ENCODE measurements at regions of chr19 and their contacts with region 1.

Region 1: GRCh38 chr19:2648528-2648937 is 54.0 kb downstream of the GNG7 start:
- H3K4me3 Mint-ChIP-seq: no peak overlapping the region
- H3K27ac Mint-ChIP-seq: no peak overlapping the region
- H3K4me1 Mint-ChIP-seq: no peaks in the 10 kb centered on the region
- H3K27me3 Mint-ChIP-seq: no peaks in the 10 kb centered on the region

Region 2: GRCh38 chr19:2691951-2692350 is 43.4 kb after region 1 on chr19:
- intact Hi-C with region 1: loop called (anchors 5 kb)
- H3K4me3 Mint-ChIP-seq: no peak overlapping the region
- H3K27ac Mint-ChIP-seq: no peak overlapping the region
- H3K4me1 Mint-ChIP-seq: peaks cover 15% of the 10 kb centered on the region
- H3K27me3 Mint-ChIP-seq: peaks cover 1% of the 10 kb centered on the region

Region 3: DNA sequence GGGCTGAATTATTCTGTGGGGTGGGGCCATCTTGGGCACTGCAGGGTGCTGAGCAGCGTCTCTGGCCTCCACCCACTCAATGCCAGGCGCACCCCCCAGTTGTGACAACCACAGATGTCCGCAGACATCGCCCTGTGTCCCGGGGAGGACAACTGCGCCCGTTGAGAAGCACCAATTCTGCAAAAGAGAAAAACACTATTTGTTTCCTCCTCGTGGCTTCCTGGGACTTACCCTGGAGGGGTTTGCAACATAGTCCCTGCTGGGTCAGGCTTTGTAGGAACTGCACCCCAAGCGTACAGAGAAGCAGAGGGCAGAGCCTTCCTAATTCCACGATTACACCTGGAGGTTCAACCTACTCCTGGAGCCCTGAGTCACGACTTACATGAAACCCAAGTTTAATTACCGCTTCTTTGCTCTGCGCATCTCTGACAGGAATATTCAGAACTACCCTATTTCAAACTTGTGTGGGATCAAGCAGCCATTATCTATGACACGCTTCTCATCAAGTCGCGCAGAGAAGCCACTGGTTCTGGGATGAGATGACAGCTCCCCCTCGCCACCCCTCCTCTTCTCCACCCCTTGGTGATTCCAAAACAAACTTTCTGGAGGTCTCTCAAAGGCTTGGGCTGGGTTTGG is 102.4 kb after region 1 on chr19:
- intact Hi-C with region 1: loop called (anchors 1 kb)
- H3K4me3 Mint-ChIP-seq: no peak overlapping the region
- H3K27ac Mint-ChIP-seq: no peak overlapping the region
- H3K4me1 Mint-ChIP-seq: peaks cover 13% of the 10 kb centered on the region
- H3K27me3 Mint-ChIP-seq: peaks cover 10% of the 10 kb centered on the region

Region 4: DNA sequence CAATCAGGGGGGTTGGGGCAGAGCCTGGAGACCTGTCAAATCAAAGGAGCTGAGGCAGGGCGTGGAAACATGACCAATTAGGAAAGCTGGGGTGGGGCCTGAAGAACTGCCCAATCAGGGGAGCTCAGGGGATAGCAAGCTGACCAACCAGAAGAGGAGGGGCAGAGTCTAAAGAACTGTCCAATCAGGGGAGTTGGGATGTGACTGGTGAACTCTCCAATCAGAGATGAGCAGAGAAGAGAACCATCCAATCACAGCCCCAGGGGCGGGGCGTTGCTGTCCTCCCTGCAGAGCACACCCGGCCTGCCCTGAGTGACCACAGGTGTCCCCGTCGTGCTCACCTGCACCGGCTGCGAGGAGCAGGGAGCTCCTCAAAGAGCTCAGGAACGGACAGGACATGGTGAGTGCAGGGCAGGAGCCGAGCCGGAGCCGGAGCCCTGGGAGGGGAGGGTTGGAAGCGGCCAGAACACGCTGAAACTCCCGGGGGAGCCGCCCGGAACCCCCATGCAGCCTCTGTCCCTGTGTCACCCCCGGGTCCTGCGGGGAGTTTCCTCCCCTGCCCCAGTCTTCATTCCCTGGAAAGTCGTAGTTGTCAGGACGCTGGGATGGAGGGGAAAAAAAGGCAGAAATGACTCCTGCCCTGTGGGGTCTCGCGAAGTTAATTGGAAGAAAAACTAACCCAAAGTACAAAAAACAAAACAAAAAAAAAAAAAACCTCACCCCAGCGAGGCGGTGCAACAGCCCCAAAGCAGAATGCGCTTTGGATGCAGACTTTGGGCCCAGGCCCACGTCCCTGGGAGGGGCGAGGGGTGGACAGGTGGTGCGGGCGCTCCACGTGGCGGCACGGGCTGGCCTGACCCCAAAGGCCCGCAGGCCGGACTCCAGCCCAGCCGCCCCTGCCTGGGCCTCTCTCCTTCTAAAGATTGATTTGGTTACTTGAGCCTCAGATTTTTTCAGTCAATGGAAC is 218.8 kb after region 1 on chr19 and contains the start of gene ZNF556:
- intact Hi-C with region 1: loop called (anchors 2 kb)
- H3K4me3 Mint-ChIP-seq: no peak within 1 kb of the TSS
- H3K27ac Mint-ChIP-seq: no peak within 1 kb of the TSS
- H3K4me1 Mint-ChIP-seq: peaks cover 10% of the 10 kb centered on the region
- H3K27me3 Mint-ChIP-seq: peaks cover 2% of the 10 kb centered on the region

Measured in dendritic cell treated with granulocyte-macrophage colony-stimulating factor and Interleukin-4, amounts not matched to agents 40 ng/mL and 50 ng/mL, for 4 days (primary cell).